T-cell (primary cell): ENCODE measurements at regions of chr7 and their contacts with region 1.

Region 1: GRCh38 chr7:106166655-106167342 is 54.7 kb upstream of the SYPL1 start:
- DNase-seq: peak in 12 of 35 experiments; percentile 9 to 71 (median 16)
- ATAC-seq: peak in 1 of 4 experiments; percentile 43
- H3K4me3 ChIP-seq: no peak overlapping the region
- H3K4me3 Mint-ChIP-seq: no peak overlapping the region
- H3K27ac ChIP-seq: no peak overlapping the region
- H3K27ac Mint-ChIP-seq: peak overlapping the region in 1 of 2 donors; percentile 19
- H3K4me1 ChIP-seq: no peaks in the 10 kb centered on the region
- H3K4me1 Mint-ChIP-seq: no peaks in the 10 kb centered on the region
- H3K27me3 ChIP-seq: peaks cover 0 to 10% of the 10 kb centered on the region in 2 experiments
- H3K27me3 Mint-ChIP-seq: peaks cover 7 to 9% of the 10 kb centered on the region in 2 donors

Region 2: GRCh38 chr7:105365541-105366534 is 801.0 kb before region 1 on chr7:
- CTCF ChIA-PET with region 1: no interaction called
- POLR2A ChIA-PET with region 1: interaction called in 1 of 2 experiments, 15 read pairs
- DNase-seq: no peak
- ATAC-seq: no peak
- H3K4me3 ChIP-seq: no peak overlapping the region
- H3K4me3 Mint-ChIP-seq: no peak overlapping the region
- H3K27ac ChIP-seq: no peak overlapping the region
- H3K27ac Mint-ChIP-seq: peak overlapping the region in 1 of 2 donors; percentile 42
- H3K4me1 ChIP-seq: peaks cover 0 to 7% of the 10 kb centered on the region in 2 experiments
- H3K4me1 Mint-ChIP-seq: peaks cover 44 to 59% (median 59%) of the 10 kb centered on the region in 3 donors
- H3K27me3 ChIP-seq: no peaks in the 10 kb centered on the region
- H3K27me3 Mint-ChIP-seq: no peaks in the 10 kb centered on the region

Region 3: GRCh38 chr7:106080300-106080987 is 86.4 kb before region 1 on chr7:
- CTCF ChIA-PET with region 1: interaction called, 3 to 13 read pairs
- POLR2A ChIA-PET with region 1: no interaction called
- DNase-seq: no peak
- ATAC-seq: no peak
- H3K4me3 ChIP-seq: no peak overlapping the region
- H3K4me3 Mint-ChIP-seq: no peak overlapping the region
- H3K27ac ChIP-seq: no peak overlapping the region
- H3K27ac Mint-ChIP-seq: no peak overlapping the region
- H3K4me1 ChIP-seq: peaks cover 0 to 2% of the 10 kb centered on the region in 2 experiments
- H3K4me1 Mint-ChIP-seq: peaks cover 21 to 38% (median 29%) of the 10 kb centered on the region in 3 donors
- H3K27me3 ChIP-seq: no peaks in the 10 kb centered on the region
- H3K27me3 Mint-ChIP-seq: no peaks in the 10 kb centered on the region

Region 4: DNA sequence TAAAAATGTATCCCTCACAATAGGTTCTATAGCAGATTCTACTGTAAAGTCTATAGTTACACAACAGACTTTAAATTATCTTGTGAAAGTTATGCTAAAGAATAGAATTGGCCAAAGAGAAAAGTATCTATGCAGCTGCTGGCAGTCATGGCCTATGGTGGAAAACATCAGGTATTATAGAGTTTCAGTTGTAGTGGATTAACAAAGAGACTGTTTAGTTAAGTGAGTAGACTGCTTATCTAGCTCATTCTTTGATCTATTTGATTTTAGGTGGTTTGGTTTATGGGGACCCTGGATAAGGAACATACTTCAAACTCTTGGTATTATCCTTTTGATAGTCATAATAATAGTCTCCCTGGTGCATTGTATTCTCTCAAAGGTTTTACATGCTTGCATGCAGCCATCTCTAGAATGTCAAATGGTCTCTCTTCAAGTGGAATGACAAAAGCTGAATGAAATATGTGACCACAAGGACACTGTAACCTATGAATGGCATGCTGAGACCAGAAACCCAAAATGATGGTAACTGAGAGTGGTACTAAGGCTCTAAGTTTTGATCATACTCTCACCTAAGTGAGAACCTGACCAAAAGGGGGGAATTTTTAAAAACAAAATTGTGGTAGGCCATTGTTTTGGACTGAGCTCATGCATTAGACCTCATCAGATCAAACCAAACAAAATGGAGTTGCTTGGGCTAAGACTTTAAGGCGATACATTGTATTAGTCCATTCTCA is 172.9 kb after region 1 on chr7:
- CTCF ChIA-PET with region 1: no interaction called
- POLR2A ChIA-PET with region 1: no interaction called
- DNase-seq: no peak
- ATAC-seq: no peak
- H3K4me3 ChIP-seq: no peak overlapping the region
- H3K4me3 Mint-ChIP-seq: no peak overlapping the region
- H3K27ac ChIP-seq: no peak overlapping the region
- H3K27ac Mint-ChIP-seq: no peak overlapping the region
- H3K4me1 ChIP-seq: no peaks in the 10 kb centered on the region
- H3K4me1 Mint-ChIP-seq: peaks cover 0 to 2% (median 1%) of the 10 kb centered on the region in 3 donors
- H3K27me3 ChIP-seq: peaks cover 0 to 5% of the 10 kb centered on the region in 2 experiments
- H3K27me3 Mint-ChIP-seq: peaks cover 16 to 38% of the 10 kb centered on the region in 2 donors